ENCODE measurements at regions of chr6 and their contacts with region 1.

Region 1: DNA sequence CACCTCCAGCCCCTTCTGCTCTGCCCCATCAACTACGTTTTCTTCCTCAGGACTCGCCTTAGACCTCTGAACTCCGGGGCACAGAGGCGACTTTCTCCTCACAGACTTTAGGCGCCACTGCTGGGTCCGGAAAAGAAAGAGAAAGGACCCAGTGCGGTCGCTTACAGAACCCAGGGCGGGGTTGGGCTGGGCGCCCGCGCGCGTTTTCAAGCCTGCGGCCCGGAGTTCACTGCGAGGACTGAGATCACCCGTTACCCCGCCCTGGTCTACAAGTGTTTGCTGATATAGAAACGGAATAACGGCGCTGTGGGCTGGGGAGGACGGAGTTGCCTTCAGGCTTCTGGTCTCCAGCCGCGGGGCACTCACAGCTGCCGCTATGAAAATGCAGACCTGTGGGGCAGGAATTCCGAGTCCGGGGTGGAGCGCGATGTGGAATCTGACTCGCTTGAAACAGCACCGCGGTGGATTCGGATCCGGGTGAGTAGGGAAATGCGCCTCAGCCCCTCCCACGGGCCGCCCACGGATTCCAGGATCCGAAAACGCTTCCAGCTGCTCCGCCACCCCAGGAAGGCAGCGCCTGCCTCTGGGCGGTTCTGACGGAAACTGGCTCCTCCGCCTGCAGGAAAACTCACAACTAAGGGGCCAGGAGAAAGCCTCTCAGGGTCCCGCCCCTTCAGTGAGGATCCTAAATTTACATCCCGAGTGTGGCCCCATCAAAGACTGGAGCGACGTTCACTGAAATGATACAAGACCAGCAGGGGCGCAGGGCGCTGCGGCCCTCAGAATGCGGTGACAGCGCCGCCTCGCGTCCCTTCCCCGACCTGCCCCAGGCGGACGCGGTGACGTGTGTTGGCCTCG is 29.4 kb downstream of the HLA-F start:
- DNase-seq: peak; percentile 80 to 91 (median 88)
- H3K4me3 ChIP-seq: peak overlapping the region; percentile 57
- H3K27ac ChIP-seq: peak overlapping the region; percentile 78 to 91
- H3K4me1 ChIP-seq: peaks cover 1% of the 10 kb centered on the region
- H3K27me3 ChIP-seq: no peaks in the 10 kb centered on the region
- CTCF ChIP-seq: peak; percentile 85 to 97 (median 95)
- EP300 ChIP-seq: no peak
- POLR2A ChIP-seq: peak; percentile 38

Region 2: DNA sequence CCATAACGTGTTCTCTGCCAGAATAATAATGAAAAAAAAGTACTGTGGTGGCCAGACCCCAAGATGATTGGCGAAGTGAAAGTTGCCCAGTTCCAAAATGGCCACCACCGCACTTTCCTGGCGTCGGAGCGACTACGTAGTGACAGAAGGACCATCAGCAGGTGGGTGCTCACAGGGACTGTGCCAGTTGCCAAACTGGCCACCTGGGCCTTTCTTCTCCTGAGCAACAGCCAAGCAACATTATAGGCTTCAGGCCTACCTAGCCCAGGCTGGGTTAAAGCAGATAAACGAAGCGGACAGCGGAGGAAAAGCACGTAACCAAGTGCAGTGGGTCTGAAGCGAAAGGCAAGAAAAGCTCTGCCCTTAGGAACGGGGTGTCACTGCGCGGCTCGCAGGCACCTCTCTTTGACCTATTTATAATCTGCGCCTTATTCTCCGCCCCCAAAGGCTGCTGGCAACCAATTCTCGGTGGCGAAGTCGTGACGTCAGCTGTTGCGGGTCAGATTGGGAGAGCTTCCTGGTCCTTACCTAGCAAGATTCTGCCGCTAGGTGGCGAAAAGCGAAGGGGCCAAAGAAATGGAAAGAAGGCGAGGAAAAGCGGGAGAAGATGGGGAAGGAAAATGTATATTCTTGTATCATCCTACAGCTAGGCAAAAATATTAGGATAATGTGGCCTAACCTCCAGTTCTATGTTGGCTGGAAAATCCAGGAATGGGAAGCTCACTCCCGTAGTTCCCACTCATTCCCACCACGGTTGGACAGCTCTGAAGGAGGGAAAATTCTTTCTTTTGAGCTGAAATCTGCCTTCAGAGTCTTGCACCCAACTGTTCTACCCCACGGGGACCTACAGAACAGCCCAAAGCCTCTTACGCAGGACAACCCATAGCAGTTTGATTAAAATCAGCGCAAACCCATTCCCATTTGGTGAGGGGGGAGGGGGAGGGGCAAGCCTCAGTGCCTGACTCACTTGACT is 102.7 kb before region 1 on chr6:
- intact Hi-C with region 1: loop called in 2 of 4 experiments (anchors 5 to 10 kb)
- DNase-seq: peak; percentile 97 to 99 (median 98)
- H3K4me3 ChIP-seq: peak overlapping the region; percentile 52
- H3K27ac ChIP-seq: peak overlapping the region; percentile 54 to 94
- H3K4me1 ChIP-seq: no peaks in the 10 kb centered on the region
- H3K27me3 ChIP-seq: no peaks in the 10 kb centered on the region
- CTCF ChIP-seq: peak; percentile 82 to 94 (median 92)
- EP300 ChIP-seq: peak; percentile 62
- POLR2A ChIP-seq: peak; percentile 72

Region 3: GRCh38 chr6:29734046-29735018 is 18.3 kb before region 1 on chr6:
- intact Hi-C with region 1: no loop called
- DNase-seq: no peak
- H3K4me3 ChIP-seq: no peak overlapping the region
- H3K27ac ChIP-seq: no peak overlapping the region
- H3K4me1 ChIP-seq: no peaks in the 10 kb centered on the region
- H3K27me3 ChIP-seq: no peaks in the 10 kb centered on the region
- CTCF ChIP-seq: no peak
- EP300 ChIP-seq: no peak
- POLR2A ChIP-seq: no peak